ENCODE measurements at regions of chr12 and their contacts with region 1.

Region 1: GRCh38 chr12:4421590-4422031 is 24.0 kb downstream of the FGF6 start:
- DNase-seq: peak; percentile 50 to 65 (median 62)
- ATAC-seq: peak; percentile 69
- H3K4me3 ChIP-seq: no peak overlapping the region
- H3K27ac ChIP-seq: no peak overlapping the region
- H3K4me1 ChIP-seq: no peaks in the 10 kb centered on the region
- H3K27me3 ChIP-seq: peaks cover 8 to 33% of the 10 kb centered on the region in 2 experiments; a peak in 4 of 5 replicates
- CTCF ChIP-seq: peak; percentile 44 to 60 (median 52); a peak in 5 of 6 replicates
- EP300 ChIP-seq: no peak
- POLR2A ChIP-seq: no peak
- RAD21 ChIP-seq: peak; percentile 11 to 49; a peak in 2 of 4 replicates

Region 2: GRCh38 chr12:4330203-4330602 is 91.4 kb before region 1 on chr12:
- CTCF ChIA-PET with region 1: no interaction called
- POLR2A ChIA-PET with region 1: no interaction called
- in situ Hi-C with region 1: no loop called
- intact Hi-C with region 1: no loop called
- DNase-seq: no peak
- ATAC-seq: no peak
- H3K4me3 ChIP-seq: no peak overlapping the region
- H3K27ac ChIP-seq: no peak overlapping the region
- H3K4me1 ChIP-seq: no peaks in the 10 kb centered on the region
- H3K27me3 ChIP-seq: no peaks in the 10 kb centered on the region
- CTCF ChIP-seq: no peak
- EP300 ChIP-seq: no peak
- POLR2A ChIP-seq: no peak
- RAD21 ChIP-seq: no peak

Region 3: DNA sequence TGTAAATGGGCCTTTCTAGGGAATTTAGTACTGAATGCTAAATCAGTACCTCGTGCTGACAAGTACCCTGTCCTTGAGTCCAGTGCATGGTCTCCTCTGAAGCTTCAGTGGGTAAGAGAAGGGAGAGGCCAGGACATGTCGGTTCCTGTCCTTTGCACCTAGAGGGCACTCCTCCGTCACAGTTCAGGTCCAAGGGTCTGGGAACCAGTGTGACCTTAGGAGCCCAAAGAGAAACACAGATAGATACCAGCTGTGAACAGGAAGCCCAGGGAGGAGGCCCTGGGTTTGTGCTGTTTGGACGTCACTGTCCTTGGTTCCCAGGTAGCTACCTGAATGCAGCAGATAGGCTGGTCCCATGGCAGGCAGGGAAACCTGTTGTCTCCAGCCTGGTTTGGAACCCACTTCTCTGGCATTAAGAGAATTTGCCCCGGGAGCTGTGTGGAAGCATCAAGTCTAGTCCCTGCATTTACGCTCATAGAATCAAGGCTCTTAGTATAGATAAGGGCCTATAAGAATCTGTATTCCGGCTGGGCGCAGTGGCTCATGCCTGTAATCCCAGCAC is 38.2 kb before region 1 on chr12:
- CTCF ChIA-PET with region 1: no interaction called
- POLR2A ChIA-PET with region 1: no interaction called
- in situ Hi-C with region 1: no loop called
- intact Hi-C with region 1: loop called (anchors 5 kb)
- DNase-seq: peak; percentile 18 to 72 (median 46)
- ATAC-seq: peak; percentile 95
- H3K4me3 ChIP-seq: no peak overlapping the region
- H3K27ac ChIP-seq: no peak overlapping the region
- H3K4me1 ChIP-seq: peaks cover 4 to 7% of the 10 kb centered on the region in 2 experiments; a peak in 4 of 5 replicates
- H3K27me3 ChIP-seq: peaks cover 2 to 14% of the 10 kb centered on the region in 2 experiments; a peak in 3 of 5 replicates
- CTCF ChIP-seq: peak; percentile 63 to 68 (median 65)
- EP300 ChIP-seq: no peak
- POLR2A ChIP-seq: no peak
- RAD21 ChIP-seq: peak; percentile 58 to 86

Measured in K562 (cell line).